ENCODE measurements at regions of chr2 and their contacts with region 1.

Region 1: DNA sequence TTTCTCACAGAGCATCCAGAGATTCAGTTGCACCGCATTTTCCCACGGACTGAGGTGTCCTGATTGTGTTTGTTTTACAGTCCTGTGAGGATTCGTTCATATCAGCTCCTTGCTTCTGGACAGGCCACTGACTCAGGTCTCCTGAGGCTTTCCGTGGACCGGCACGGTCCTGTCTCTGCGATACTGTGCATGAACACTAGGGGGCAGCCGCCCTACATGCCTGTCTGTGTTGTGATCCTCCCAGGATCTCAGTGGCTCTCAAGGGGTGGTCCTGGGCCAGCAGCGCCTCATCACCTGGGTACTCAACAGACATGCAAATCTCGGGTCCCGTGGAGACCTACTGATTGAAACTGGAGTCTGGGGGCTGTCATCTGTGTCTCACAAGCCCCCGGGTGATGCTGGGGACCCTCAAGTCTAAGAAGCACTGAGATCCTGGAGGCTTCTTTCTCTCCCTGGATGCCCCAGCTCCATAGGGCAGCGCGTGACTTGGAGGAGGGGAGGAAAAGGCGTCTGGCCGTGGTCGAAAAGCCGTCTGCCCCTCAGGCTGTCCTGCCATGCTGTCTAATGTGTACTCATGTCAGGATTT is 28.9 kb downstream of the IL1R2 start:
- DNase-seq: peak; percentile 83
- H3K4me3 ChIP-seq: no peak overlapping the region
- H3K27ac ChIP-seq: no peak overlapping the region
- H3K4me1 ChIP-seq: no peaks in the 10 kb centered on the region
- H3K27me3 ChIP-seq: no peaks in the 10 kb centered on the region
- CTCF ChIP-seq: peak; percentile 95 to 97
- POLR2A ChIP-seq: no peak

Region 2: DNA sequence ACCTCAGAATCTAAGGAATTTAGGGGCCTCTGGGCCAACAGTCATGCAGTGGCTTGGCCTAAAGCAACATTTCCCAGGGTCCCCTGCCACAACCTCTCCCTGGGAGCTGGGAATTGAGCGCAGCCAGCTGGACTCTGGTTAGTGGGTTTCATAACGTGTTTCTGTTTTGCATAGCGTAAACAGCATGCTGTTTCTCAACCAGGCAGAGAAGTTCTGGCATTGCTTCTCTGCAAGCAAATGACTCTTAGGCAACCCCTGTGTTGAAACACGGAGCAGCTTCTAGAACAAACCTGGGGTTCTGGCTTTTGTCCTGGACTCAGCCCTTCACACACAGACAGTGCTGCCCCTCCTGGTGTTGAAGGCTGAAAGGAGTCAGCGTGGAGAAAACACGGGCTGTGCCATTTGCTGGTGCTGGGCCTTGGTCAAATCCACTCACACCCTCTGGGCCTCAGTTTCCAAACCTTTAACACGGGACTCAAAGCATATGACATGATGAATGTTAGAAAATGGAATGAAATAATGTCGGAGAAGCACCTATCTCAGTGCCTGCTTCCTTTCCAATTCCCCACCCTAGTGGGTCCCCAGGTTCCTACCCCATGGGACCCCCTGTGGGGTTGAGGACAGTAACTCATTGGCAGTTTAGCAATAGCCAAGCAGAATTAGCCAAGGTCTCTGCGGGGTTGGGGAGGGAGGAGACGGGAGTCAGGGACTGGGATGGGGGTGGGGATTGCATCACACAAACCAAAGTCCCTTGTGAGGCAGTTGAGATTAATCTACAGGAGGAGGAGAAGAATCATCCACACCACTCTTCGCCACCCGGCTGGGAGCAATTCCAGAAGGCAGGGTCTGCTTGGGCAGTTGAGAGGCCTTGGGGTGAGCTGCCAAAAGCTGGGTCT is 59.1 kb before region 1 on chr2:
- CTCF ChIA-PET with region 1: no interaction called
- POLR2A ChIA-PET with region 1: no interaction called
- dilution Hi-C with region 1: no loop called
- intact Hi-C with region 1: no loop called
- DNase-seq: no peak
- H3K4me3 ChIP-seq: no peak overlapping the region
- H3K27ac ChIP-seq: no peak overlapping the region
- H3K4me1 ChIP-seq: no peaks in the 10 kb centered on the region
- H3K27me3 ChIP-seq: peaks cover 3 to 19% of the 10 kb centered on the region in 2 experiments
- CTCF ChIP-seq: no peak
- POLR2A ChIP-seq: no peak

Region 3: DNA sequence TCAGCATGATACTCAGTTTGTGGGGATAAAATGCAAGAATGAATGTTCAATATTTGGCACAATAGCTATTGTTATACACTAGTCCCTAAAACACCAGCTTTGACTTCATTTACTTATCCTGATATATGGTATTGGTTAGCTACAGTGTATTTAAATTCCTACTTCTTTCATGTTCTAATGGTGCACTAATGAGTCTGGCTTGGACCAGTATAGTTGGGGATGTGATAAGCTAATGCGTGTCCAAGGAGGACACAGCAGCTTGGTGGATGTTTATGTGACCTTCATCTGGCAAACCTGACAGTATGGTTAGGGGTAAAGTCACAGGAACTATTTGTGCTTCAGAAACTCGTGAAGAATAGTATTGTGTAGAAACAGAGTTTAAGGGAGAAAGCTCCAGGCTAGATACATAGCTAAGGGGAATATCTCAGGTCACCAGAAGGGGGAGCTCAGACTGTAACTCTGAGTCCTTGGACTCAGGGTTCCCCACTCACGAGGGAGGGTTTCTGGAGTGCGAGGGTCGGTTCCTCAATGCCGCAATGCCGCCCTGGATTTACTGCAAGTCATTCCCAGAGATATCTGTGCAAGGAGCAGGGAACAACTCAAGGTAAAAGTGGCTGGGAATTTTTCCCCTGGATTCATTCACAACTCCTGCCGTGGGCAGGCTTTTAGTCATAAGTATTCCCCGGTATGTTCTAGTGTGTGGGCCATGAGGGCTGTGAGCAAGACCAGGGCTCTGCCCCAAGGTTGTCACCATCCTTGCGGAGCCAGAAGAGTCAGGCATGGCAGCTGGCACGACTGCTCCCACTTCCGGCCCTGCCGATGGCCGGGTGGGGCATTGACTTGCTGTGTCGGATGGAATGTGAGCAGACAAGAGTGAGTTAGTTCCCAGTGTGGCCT is 14.5 kb before region 1 on chr2:
- CTCF ChIA-PET with region 1: interaction called, 29 read pairs
- POLR2A ChIA-PET with region 1: no interaction called
- dilution Hi-C with region 1: no loop called
- intact Hi-C with region 1: no loop called
- DNase-seq: peak; percentile 55
- H3K4me3 ChIP-seq: no peak overlapping the region
- H3K27ac ChIP-seq: no peak overlapping the region
- H3K4me1 ChIP-seq: peaks cover 9% of the 10 kb centered on the region
- H3K27me3 ChIP-seq: no peaks in the 10 kb centered on the region
- CTCF ChIP-seq: peak; percentile 66 to 82
- POLR2A ChIP-seq: no peak

Region 4: GRCh38 chr2:102082571-102083392 is 62.1 kb after region 1 on chr2:
- CTCF ChIA-PET with region 1: interaction called, 13 read pairs
- POLR2A ChIA-PET with region 1: no interaction called
- dilution Hi-C with region 1: no loop called
- intact Hi-C with region 1: no loop called
- DNase-seq: peak; percentile 88
- H3K4me3 ChIP-seq: peak overlapping the region in 1 of 3 experiments; percentile 19
- H3K27ac ChIP-seq: peak overlapping the region; percentile 60
- H3K4me1 ChIP-seq: peaks cover 20% of the 10 kb centered on the region
- H3K27me3 ChIP-seq: no peaks in the 10 kb centered on the region
- CTCF ChIP-seq: no peak
- POLR2A ChIP-seq: no peak

Region 5: DNA sequence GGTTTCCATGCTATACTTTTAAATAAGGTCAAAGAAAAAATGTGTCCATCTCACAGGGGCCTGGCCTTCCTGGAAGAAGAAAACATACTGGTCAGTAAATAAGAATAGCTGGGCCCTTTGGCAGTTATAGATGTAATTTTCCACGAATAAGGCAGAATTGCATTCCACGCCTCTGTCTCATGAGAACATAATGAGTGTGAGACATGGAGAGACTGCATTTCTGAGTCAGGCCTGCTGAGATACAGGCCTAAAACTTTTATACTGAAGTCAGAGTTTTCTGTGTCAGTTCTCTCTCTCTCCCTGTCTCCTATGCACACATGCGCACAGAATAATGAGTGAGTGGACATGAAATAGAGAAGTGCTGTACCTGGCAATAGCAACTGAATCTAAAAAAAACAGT is 101.4 kb after region 1 on chr2:
- CTCF ChIA-PET with region 1: no interaction called
- POLR2A ChIA-PET with region 1: no interaction called
- dilution Hi-C with region 1: no loop called
- intact Hi-C with region 1: no loop called
- DNase-seq: no peak
- H3K4me3 ChIP-seq: no peak overlapping the region
- H3K27ac ChIP-seq: no peak overlapping the region
- H3K4me1 ChIP-seq: no peaks in the 10 kb centered on the region
- H3K27me3 ChIP-seq: no peaks in the 10 kb centered on the region
- CTCF ChIP-seq: no peak
- POLR2A ChIP-seq: no peak

Region 6: DNA sequence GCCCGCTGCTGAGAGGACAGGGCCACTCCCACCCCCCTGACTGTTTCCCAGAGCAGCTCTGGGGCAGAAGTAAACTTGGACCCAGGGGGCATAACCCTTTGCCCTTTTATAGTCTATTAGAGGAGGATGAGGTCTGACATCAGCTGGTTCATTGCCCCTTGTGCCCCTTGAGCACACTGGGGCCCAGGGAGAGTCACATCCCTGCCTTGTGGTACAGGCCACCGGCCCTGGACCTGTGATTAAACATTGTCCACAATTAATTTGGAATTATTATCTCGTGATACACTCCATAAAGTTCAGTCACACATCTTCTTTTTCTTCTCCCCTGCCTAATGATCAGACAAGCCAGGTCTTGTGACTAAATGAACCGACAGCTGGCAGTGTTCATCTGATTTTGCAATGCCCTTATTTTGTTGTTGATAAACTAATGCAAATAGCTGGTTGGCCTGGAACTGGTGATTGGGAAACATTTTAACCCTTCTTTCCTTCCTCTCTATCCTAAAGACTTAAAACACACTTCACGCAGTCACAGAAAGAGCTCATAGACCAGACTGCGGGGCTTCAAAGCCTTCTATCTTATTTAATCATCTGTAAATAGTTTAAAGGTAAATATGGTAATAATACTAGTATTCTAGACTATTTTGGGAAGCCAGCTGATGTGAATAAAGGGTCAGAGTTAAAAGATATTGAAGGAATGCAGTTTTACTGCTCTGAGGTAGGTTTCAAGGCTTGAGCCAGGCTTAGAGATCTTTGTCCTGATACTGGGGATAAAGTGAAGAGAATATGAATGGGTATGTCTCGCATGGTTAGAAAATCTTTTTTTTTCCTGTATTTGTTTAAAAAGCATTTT is 135.2 kb after region 1 on chr2:
- CTCF ChIA-PET with region 1: interaction called, 10 read pairs
- POLR2A ChIA-PET with region 1: no interaction called
- dilution Hi-C with region 1: no loop called
- intact Hi-C with region 1: no loop called
- DNase-seq: no peak
- H3K4me3 ChIP-seq: no peak overlapping the region
- H3K27ac ChIP-seq: no peak overlapping the region
- H3K4me1 ChIP-seq: no peaks in the 10 kb centered on the region
- H3K27me3 ChIP-seq: no peaks in the 10 kb centered on the region
- CTCF ChIP-seq: no peak
- POLR2A ChIP-seq: no peak

Region 7: DNA sequence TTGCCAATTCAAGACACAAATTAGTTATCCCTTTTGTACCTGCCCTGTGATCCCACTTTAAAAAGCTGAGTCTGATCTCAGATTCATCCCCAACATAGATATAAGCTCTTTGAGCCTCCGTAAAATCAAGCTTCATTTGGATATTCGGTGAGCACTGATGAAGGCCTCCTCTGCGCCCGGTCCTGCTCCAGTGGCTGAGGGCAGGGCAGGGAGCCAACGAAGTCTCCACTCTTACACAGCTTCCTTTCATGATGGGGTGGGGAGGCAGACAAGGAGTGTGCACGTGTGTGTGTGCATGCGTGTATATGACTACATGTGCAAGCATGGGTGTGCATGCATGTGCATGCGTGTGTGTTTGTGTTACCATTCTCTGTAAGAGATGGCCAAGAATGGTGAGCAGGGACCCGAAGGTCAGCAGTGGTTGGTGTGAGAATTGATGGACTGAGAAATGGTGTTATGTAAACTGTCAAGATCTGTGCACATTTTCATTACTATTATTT is 209.8 kb after region 1 on chr2:
- CTCF ChIA-PET with region 1: interaction called, 22 read pairs
- POLR2A ChIA-PET with region 1: no interaction called
- dilution Hi-C with region 1: no loop called
- intact Hi-C with region 1: no loop called
- DNase-seq: no peak
- H3K4me3 ChIP-seq: no peak overlapping the region
- H3K27ac ChIP-seq: no peak overlapping the region
- H3K4me1 ChIP-seq: peaks cover 25% of the 10 kb centered on the region
- H3K27me3 ChIP-seq: no peaks in the 10 kb centered on the region
- CTCF ChIP-seq: no peak
- POLR2A ChIP-seq: no peak

Region 8: DNA sequence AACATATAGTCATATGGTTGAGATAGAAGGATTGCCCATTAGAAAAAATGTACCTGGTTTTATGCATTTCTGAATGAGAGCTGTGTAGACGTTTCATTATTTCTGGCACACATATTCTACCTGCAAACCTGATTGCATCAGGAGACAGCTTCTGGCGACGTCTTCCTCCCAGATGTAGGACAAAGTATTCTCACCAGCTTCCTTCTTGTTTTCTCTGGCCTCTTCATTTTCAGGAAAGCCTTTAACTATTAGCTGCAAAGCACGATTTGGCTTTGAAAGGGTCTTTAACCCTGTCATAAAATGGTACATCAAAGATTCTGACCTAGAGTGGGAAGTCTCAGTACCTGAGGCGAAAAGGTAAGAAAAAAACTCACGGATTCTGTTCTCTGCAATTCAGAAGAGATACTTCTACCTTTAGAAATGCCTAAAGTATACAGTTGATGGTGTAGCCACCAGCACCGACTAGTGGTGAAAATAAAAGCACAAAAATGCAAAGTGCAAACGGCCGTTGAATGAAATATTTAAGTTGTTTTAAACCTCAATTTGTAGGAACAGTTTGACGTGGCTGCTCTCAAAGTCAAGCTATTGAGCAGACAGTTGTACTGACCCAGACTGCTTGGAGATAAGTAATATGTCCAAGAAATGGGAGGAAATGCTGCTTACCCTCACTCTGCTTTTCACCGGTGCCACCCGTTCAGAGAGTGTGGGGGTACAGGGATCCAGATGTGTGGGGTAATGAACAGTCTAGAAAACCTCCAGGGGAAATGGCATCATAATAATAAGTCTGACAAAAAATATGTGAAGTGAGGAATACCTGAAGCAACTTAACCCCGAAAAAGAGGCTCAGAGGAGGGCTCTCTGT is 422.5 kb after region 1 on chr2:
- CTCF ChIA-PET with region 1: interaction called, 23 read pairs
- POLR2A ChIA-PET with region 1: no interaction called
- dilution Hi-C with region 1: no loop called
- intact Hi-C with region 1: loop called (anchors 1 kb)
- DNase-seq: peak; percentile 64
- H3K4me3 ChIP-seq: no peak overlapping the region
- H3K27ac ChIP-seq: no peak overlapping the region
- H3K4me1 ChIP-seq: no peaks in the 10 kb centered on the region
- H3K27me3 ChIP-seq: no peaks in the 10 kb centered on the region
- CTCF ChIP-seq: peak; percentile 56 to 62
- POLR2A ChIP-seq: no peak

Measured in endothelial cell of umbilical vein (primary cell).